ENCODE measurements at regions of chr3 and their contacts with region 1.

Region 1: GRCh38 chr3:81658322-81658997 is 103.0 kb downstream of the GBE1 start:
- DNase-seq: no peak
- H3K4me3 Mint-ChIP-seq: no peak overlapping the region
- H3K27ac Mint-ChIP-seq: no peak overlapping the region
- H3K4me1 Mint-ChIP-seq: peaks cover 5% of the 10 kb centered on the region
- H3K27me3 Mint-ChIP-seq: no peaks in the 10 kb centered on the region
- CTCF ChIP-seq: no peak

Region 2: GRCh38 chr3:81643721-81644120 is 14.7 kb before region 1 on chr3:
- CTCF ChIA-PET with region 1: interaction called, 10 read pairs
- POLR2A ChIA-PET with region 1: interaction called, 3 read pairs
- intact Hi-C with region 1: no loop called
- DNase-seq: peak; percentile 38
- H3K4me3 Mint-ChIP-seq: no peak overlapping the region
- H3K27ac Mint-ChIP-seq: no peak overlapping the region
- H3K4me1 Mint-ChIP-seq: no peaks in the 10 kb centered on the region
- H3K27me3 Mint-ChIP-seq: no peaks in the 10 kb centered on the region
- CTCF ChIP-seq: peak; percentile 17

Measured in MCF 10A (cell line).